Activated CD4-positive, alpha-beta T cell treated with anti-CD3 and anti-CD28 coated beads for 36 hours (primary cell): ENCODE measurements at regions of chr2 and their contacts with region 1.

Region 1: DNA sequence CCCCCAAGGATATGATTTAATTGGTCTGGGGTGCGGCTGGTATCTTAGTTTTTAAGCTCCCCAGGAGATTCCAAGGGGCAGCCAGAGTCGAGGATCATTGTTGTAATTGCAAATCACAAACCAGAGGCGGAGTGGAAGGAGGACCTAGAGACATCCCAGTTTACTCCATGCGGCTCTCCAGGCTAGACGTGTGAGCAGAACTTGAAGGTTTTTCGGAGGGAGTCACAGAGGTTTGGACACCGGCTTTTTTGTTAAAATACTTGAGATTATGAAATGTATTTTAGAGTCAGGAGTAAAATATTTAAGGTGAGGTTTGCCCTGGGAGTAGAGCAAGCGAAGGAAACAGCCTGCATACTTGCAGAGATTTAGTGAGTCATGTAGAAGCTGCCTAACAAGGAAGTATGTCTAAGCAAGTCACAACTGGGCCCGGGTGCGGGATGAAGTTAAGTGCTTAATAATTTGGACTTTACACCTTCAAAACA is 39.5 kb downstream of the TGOLN2 start:
- DNase-seq: no peak
- ATAC-seq: no peak
- H3K4me3 Mint-ChIP-seq: no peak overlapping the region
- H3K27ac Mint-ChIP-seq: no peak overlapping the region
- H3K4me1 Mint-ChIP-seq: peaks cover 19% of the 10 kb centered on the region
- H3K27me3 Mint-ChIP-seq: no peaks in the 10 kb centered on the region

Region 2: GRCh38 chr2:84946204-84947009 is 341.9 kb before region 1 on chr2:
- CTCF ChIA-PET with region 1: interaction called, 3 read pairs
- POLR2A ChIA-PET with region 1: no interaction called
- intact Hi-C with region 1: loop called in 1 of 2 experiments (anchors 5 kb)
- DNase-seq: peak; percentile 92
- ATAC-seq: peak; percentile 85
- H3K4me3 Mint-ChIP-seq: peak overlapping the region; percentile 67
- H3K27ac Mint-ChIP-seq: peak overlapping the region; percentile 99
- H3K4me1 Mint-ChIP-seq: peaks cover 49% of the 10 kb centered on the region
- H3K27me3 Mint-ChIP-seq: no peaks in the 10 kb centered on the region

Region 3: GRCh38 chr2:85066874-85067351 is 221.4 kb before region 1 on chr2:
- CTCF ChIA-PET with region 1: interaction called, 6 read pairs
- POLR2A ChIA-PET with region 1: no interaction called
- intact Hi-C with region 1: loop called (anchors 1 to 2 kb)
- DNase-seq: peak; percentile 76
- ATAC-seq: peak; percentile 55
- H3K4me3 Mint-ChIP-seq: no peak overlapping the region
- H3K27ac Mint-ChIP-seq: no peak overlapping the region
- H3K4me1 Mint-ChIP-seq: peaks cover 6% of the 10 kb centered on the region
- H3K27me3 Mint-ChIP-seq: peaks cover 9% of the 10 kb centered on the region

Region 4: DNA sequence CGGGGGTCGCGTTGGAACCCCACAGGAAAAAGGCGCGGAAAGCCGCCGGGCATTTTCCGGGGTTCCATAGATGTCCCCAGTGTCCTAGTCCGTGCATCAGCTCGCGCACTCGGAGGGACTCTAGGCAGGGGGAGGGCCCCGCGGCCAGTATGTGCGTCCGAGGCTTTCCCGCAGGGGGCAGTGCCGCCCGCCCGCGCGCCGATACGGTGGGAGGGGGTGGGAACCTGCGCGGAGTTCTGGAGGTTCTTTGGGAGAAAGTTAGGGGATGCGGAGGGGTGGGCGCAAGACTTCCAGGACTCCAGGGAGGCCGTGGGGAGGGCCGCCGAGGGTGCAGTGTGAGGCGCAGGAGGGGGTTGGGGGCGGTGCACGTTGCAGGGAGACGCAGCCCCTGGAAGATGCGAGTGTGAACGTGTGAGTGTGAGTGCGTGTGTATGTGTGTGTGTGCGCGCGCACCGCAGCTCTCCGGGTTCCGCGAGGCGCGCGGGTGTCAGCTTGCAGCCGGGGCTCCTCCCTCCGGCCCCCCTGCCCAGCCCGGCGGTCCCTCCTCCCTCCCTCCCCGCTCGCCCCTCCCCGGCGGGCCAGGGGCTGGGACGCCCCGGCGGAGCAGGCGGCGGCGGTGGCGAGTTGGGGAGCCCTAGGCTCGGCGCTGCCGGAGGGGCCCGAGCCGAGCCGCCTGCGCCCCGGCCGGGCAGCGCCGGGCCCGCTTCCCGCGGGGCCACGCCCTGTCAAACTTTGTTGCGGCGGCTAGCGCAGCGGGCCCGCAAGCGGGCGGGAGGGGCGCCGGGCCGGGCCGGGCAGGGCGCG is 155.2 kb before region 1 on chr2 and contains the start of gene TCF7L1:
- CTCF ChIA-PET with region 1: interaction called, 6 read pairs
- POLR2A ChIA-PET with region 1: no interaction called
- intact Hi-C with region 1: loop called (anchors 1 to 5 kb)
- DNase-seq: peak; percentile 67
- ATAC-seq: peak; percentile 77
- H3K4me3 Mint-ChIP-seq: peak within 1 kb of the TSS; percentile 53
- H3K27ac Mint-ChIP-seq: no peak within 1 kb of the TSS
- H3K4me1 Mint-ChIP-seq: peaks cover 9% of the 10 kb centered on the region
- H3K27me3 Mint-ChIP-seq: peaks cover 49% of the 10 kb centered on the region
- total RNA-seq, gene TCF7L1: 0.07 TPM in 1 of 2 experiments, not detected in the other

Region 5: DNA sequence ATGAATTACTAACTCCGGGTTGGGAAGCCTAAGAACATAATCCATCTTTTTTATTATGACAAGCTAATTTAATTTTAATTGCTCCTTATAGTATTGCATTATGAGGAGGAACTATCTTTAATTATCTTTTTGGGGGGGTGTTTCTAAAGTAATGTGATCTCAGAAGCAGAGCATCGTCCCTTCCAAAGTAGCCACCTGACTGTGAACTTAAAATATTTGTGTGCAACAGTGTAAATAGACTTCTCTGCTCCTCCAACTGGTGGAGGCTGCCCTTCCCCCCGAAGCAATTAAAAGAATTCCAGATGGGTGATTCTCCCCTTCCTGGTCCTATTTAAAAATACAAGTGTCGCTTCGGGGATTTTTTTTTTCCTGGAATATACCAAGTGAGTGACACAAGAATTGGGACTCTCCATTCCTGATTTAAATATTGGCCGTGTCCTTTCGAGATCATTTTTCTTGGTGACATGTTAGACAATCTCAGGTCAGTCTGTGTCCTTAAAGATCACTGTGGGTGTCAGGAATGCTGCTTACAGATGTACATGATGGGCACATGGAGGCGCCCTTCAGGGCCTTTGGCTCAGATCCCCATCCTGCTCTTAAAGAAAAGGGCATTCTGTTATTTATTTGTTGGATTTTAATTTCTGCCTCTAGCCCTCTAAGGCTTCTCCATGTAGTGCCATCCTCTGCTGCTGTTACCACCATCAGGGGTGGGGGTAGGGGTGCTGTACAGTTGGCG is 99.3 kb before region 1 on chr2:
- CTCF ChIA-PET with region 1: interaction called, 4 read pairs
- POLR2A ChIA-PET with region 1: no interaction called
- intact Hi-C with region 1: loop called in 1 of 2 experiments (anchors 5 kb)
- DNase-seq: no peak
- ATAC-seq: no peak
- H3K4me3 Mint-ChIP-seq: no peak overlapping the region
- H3K27ac Mint-ChIP-seq: no peak overlapping the region
- H3K4me1 Mint-ChIP-seq: no peaks in the 10 kb centered on the region
- H3K27me3 Mint-ChIP-seq: peaks cover 2% of the 10 kb centered on the region

Region 6: GRCh38 chr2:85266146-85267041 is 21.9 kb before region 1 on chr2:
- CTCF ChIA-PET with region 1: interaction called, 19 read pairs
- POLR2A ChIA-PET with region 1: no interaction called
- intact Hi-C with region 1: loop called (anchors 1 kb)
- DNase-seq: peak; percentile 88
- ATAC-seq: peak; percentile 89
- H3K4me3 Mint-ChIP-seq: no peak overlapping the region
- H3K27ac Mint-ChIP-seq: no peak overlapping the region
- H3K4me1 Mint-ChIP-seq: no peaks in the 10 kb centered on the region
- H3K27me3 Mint-ChIP-seq: no peaks in the 10 kb centered on the region

Region 7: GRCh38 chr2:86213699-86214502 is 925.6 kb after region 1 on chr2:
- CTCF ChIA-PET with region 1: no interaction called
- POLR2A ChIA-PET with region 1: no interaction called
- intact Hi-C with region 1: no loop called
- DNase-seq: no peak
- ATAC-seq: no peak
- H3K4me3 Mint-ChIP-seq: no peak overlapping the region
- H3K27ac Mint-ChIP-seq: peak overlapping the region; percentile 70
- H3K4me1 Mint-ChIP-seq: peaks cover 8% of the 10 kb centered on the region
- H3K27me3 Mint-ChIP-seq: no peaks in the 10 kb centered on the region